ENCODE measurements at regions of chr7 and their contacts with region 1.

Region 1: GRCh38 chr7:44123190-44124003 is at the start of gene POLD2:
- DNase-seq: peak; percentile 97
- ATAC-seq: peak; percentile 98
- H3K4me3 ChIP-seq: peak within 1 kb of the TSS; percentile 67 to 78 (median 76)
- H3K4me3 Mint-ChIP-seq: peak within 1 kb of the TSS; percentile 97
- H3K27ac ChIP-seq: peak within 1 kb of the TSS; percentile 59 to 80
- H3K27ac Mint-ChIP-seq: peak within 1 kb of the TSS; percentile 93
- H3K4me1 ChIP-seq: peaks cover 9 to 19% of the 10 kb centered on the region in 2 donors
- H3K4me1 Mint-ChIP-seq: peaks cover 22% of the 10 kb centered on the region
- H3K27me3 ChIP-seq: no peaks in the 10 kb centered on the region
- H3K27me3 Mint-ChIP-seq: no peaks in the 10 kb centered on the region
- CTCF ChIP-seq: no peak
- total RNA-seq, gene POLD2: 86.7 and 91.0 TPM in 2 replicates

Region 2: GRCh38 chr7:44044315-44045225 is 78.8 kb before region 1 on chr7 and contains the start of gene DBNL:
- CTCF ChIA-PET with region 1: no interaction called
- POLR2A ChIA-PET with region 1: no interaction called
- intact Hi-C with region 1: loop called (anchors 2 kb)
- DNase-seq: peak; percentile 89
- ATAC-seq: peak; percentile 42
- H3K4me3 ChIP-seq: peak within 1 kb of the TSS; percentile 86 to 96 (median 91)
- H3K4me3 Mint-ChIP-seq: peak within 1 kb of the TSS; percentile 98
- H3K27ac ChIP-seq: peak within 1 kb of the TSS; percentile 83 to 96
- H3K27ac Mint-ChIP-seq: peak within 1 kb of the TSS; percentile 99
- H3K4me1 ChIP-seq: peaks cover 51 to 60% of the 10 kb centered on the region in 2 donors
- H3K4me1 Mint-ChIP-seq: peaks cover 58% of the 10 kb centered on the region
- H3K27me3 ChIP-seq: no peaks in the 10 kb centered on the region
- H3K27me3 Mint-ChIP-seq: no peaks in the 10 kb centered on the region
- CTCF ChIP-seq: no peak
- total RNA-seq, gene DBNL: 311 and 335 TPM in 2 replicates

Region 3: GRCh38 chr7:44097064-44097932 is 26.1 kb before region 1 on chr7:
- CTCF ChIA-PET with region 1: interaction called, 3 read pairs
- POLR2A ChIA-PET with region 1: interaction called, 10 read pairs
- intact Hi-C with region 1: loop called (anchors 2 kb)
- DNase-seq: peak; percentile 80
- ATAC-seq: peak; percentile 87
- H3K4me3 ChIP-seq: no peak overlapping the region
- H3K4me3 Mint-ChIP-seq: peak overlapping the region; percentile 57
- H3K27ac ChIP-seq: peak overlapping the region; percentile 78 to 84
- H3K27ac Mint-ChIP-seq: peak overlapping the region; percentile 87
- H3K4me1 ChIP-seq: peaks cover 40 to 83% of the 10 kb centered on the region in 2 donors
- H3K4me1 Mint-ChIP-seq: peaks cover 77% of the 10 kb centered on the region
- H3K27me3 ChIP-seq: no peaks in the 10 kb centered on the region
- H3K27me3 Mint-ChIP-seq: no peaks in the 10 kb centered on the region
- CTCF ChIP-seq: no peak

Region 4: DNA sequence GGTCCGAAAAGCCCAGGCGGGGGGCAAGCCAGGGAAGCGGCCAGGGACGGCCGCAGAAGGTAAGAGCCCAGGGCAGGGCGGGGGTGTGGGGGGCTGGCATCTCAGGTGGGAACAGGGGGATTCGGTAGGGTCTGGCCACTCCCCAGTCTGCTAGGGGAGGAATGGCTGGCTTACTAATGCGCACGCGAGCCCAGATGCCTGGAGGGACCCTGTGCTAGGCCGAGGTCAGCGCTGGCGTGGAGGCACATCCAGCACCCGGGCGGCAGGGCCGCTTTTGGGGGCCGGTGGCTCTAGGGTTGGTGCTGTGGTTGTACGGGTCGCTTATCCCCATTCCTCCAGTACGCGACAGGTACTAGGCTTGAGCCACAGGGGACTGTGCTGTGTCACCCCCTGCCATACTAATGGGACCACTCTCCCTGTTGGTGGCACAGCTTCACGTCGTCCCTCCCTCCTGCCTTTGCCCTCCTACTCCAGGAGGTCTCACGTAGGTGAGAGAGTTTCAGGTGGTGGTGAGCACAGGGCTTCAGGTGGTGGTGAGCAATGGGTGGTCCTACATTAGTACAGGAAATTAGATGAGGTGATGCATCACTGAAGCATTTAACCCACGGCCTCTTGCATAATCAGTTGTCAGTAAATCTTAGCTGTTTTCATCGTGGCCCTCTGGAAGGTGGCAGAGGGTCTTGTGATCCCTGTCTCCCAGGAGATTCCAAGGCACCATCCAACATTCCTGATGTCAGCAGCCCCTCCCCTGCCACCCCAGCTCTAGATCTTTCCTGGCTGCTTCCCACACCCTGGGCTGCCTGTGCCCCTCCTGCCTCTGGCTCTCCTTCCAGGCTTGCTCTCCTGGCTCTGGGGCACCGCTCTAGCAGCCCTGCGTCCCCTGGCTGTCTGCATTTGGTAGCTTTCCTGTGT is 18.3 kb before region 1 on chr7:
- CTCF ChIA-PET with region 1: interaction called, 5 read pairs
- POLR2A ChIA-PET with region 1: interaction called, 7 read pairs
- intact Hi-C with region 1: loop called (anchors 1 kb)
- DNase-seq: peak; percentile 57
- ATAC-seq: peak; percentile 32
- H3K4me3 ChIP-seq: peak overlapping the region; percentile 44 to 60 (median 55)
- H3K4me3 Mint-ChIP-seq: peak overlapping the region; percentile 90
- H3K27ac ChIP-seq: peak overlapping the region in 1 of 2 donors; percentile 64
- H3K27ac Mint-ChIP-seq: peak overlapping the region; percentile 76
- H3K4me1 ChIP-seq: peaks cover 37 to 56% of the 10 kb centered on the region in 2 donors
- H3K4me1 Mint-ChIP-seq: peaks cover 51% of the 10 kb centered on the region
- H3K27me3 ChIP-seq: peaks cover 0 to 11% (median 2%) of the 10 kb centered on the region in 4 experiments
- H3K27me3 Mint-ChIP-seq: no peaks in the 10 kb centered on the region
- CTCF ChIP-seq: no peak

Region 5: GRCh38 chr7:44145969-44146911 is 22.8 kb after region 1 on chr7:
- CTCF ChIA-PET with region 1: interaction called, 3 read pairs
- POLR2A ChIA-PET with region 1: no interaction called
- intact Hi-C with region 1: loop called (anchors 1 kb)
- DNase-seq: peak; percentile 64
- ATAC-seq: peak; percentile 91
- H3K4me3 ChIP-seq: peak overlapping the region in 4 of 5 experiments; percentile 40 to 67 (median 55)
- H3K4me3 Mint-ChIP-seq: peak overlapping the region; percentile 85
- H3K27ac ChIP-seq: no peak overlapping the region
- H3K27ac Mint-ChIP-seq: peak overlapping the region; percentile 50
- H3K4me1 ChIP-seq: peaks cover 13 to 28% of the 10 kb centered on the region in 2 donors
- H3K4me1 Mint-ChIP-seq: peaks cover 17% of the 10 kb centered on the region
- H3K27me3 ChIP-seq: peaks cover 0 to 24% (median 6%) of the 10 kb centered on the region in 4 experiments
- H3K27me3 Mint-ChIP-seq: no peaks in the 10 kb centered on the region
- CTCF ChIP-seq: no peak

Region 6: DNA sequence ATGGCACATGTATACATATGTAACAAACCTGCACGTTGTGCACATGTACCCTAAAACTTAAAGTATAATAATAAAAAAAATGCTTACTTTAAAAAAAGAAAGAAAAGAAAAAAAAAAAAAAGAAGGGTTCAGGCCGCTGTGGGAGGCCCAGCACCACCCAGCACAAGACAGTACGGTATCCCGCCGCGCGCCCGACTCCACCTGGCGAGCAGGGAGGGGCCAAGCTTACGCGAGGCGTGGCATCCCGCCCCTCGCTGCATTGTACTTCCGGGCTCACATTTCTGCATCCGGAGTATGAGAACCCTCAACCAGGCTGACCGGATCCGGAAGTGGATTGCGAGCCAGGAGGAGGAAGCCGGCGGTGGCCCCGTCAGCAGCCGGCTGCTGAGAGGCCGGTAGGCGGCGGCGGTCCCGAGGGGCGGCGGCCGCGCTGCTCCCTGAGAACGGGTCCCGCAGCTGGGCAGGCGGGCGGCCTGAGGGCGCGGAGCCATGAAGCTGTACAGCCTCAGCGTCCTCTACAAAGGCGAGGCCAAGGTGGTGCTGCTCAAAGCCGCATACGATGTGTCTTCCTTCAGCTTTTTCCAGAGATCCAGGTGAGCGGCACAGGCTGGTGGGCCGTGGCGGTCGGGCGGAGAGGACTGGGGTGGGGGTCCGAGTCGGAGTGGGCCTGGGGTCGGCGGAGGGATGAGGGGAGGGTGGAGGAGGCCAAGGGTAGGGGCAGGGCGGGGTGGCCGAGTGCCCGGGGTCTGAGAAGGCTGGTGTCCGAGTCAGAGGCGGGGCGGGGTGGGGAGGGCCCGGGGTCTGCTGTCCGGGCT is 77.5 kb after region 1 on chr7 and contains the start of gene YKT6:
- CTCF ChIA-PET with region 1: no interaction called
- POLR2A ChIA-PET with region 1: no interaction called
- intact Hi-C with region 1: loop called (anchors 1 kb)
- DNase-seq: peak; percentile 96
- ATAC-seq: peak; percentile 97
- H3K4me3 ChIP-seq: peak within 1 kb of the TSS; percentile 41 to 81 (median 70)
- H3K4me3 Mint-ChIP-seq: peak within 1 kb of the TSS; percentile 88
- H3K27ac ChIP-seq: peak within 1 kb of the TSS; percentile 47 to 77
- H3K27ac Mint-ChIP-seq: peak within 1 kb of the TSS; percentile 74
- H3K4me1 ChIP-seq: peaks cover 7 to 11% of the 10 kb centered on the region in 2 donors
- H3K4me1 Mint-ChIP-seq: peaks cover 23% of the 10 kb centered on the region
- H3K27me3 ChIP-seq: no peaks in the 10 kb centered on the region
- H3K27me3 Mint-ChIP-seq: peaks cover 11% of the 10 kb centered on the region
- CTCF ChIP-seq: peak; percentile 56
- total RNA-seq, gene YKT6: 62.3 and 73.4 TPM in 2 replicates

Measured in B cell (primary cell).